Endothelial cell of umbilical vein (primary cell): ENCODE measurements at regions of chr5 and their contacts with region 1.

Region 1: DNA sequence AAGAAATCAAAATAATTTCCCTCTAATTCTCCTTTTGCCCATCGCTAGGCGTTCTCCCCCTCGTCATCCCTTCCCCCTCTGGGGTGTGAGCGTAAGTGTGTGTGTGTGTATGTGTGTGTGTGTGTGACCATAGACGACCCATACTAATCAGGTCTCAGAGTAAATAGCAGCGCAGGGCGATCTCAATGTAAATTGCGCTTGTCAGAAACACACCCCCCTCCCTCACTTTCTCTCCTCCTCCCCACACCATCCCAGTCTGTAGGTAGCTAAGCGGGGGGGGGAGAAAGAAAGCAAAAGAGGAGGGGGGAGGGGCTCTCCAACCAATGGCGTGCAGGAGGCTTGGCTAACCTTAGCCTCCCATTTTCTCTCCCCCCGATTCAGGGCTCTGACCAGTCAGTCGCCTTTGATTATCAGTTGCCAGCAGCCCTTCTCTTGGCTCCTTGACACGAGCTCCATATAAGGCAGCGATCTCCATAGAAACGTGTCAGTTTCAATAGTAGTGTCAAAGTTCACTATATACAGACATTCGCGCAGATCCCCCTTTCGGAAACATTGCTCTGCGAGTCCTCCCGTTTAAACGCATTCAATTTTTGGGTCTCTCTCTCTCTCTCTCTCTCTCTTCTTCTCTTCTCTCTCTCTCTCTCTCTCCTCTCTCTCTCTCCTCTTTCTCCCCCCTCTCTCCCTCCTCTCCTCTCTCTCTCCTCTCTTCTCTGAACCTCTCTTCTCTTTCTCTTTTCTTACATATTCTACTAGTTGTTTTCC is at the start of gene NR2F1:
- DNase-seq: peak; percentile 99
- H3K4me3 ChIP-seq: peak within 1 kb of the TSS; percentile 76 to 93 (median 85)
- H3K27ac ChIP-seq: peak within 1 kb of the TSS; percentile 86
- H3K4me1 ChIP-seq: peaks cover 25% of the 10 kb centered on the region
- H3K27me3 ChIP-seq: no peaks in the 10 kb centered on the region
- CTCF ChIP-seq: no peak
- POLR2A ChIP-seq: peak; percentile 89
- total RNA-seq, gene NR2F1: 21.5 and 23.9 TPM in 2 replicates

Region 2: GRCh38 chr5:92641031-92641962 is 941.6 kb before region 1 on chr5:
- CTCF ChIA-PET with region 1: no interaction called
- POLR2A ChIA-PET with region 1: no interaction called
- dilution Hi-C with region 1: no loop called
- intact Hi-C with region 1: loop called (anchors 5 kb)
- DNase-seq: peak; percentile 90
- H3K4me3 ChIP-seq: peak overlapping the region; percentile 10 to 63 (median 22)
- H3K27ac ChIP-seq: peak overlapping the region; percentile 33
- H3K4me1 ChIP-seq: peaks cover 13% of the 10 kb centered on the region
- H3K27me3 ChIP-seq: no peaks in the 10 kb centered on the region
- CTCF ChIP-seq: no peak
- POLR2A ChIP-seq: no peak

Region 3: DNA sequence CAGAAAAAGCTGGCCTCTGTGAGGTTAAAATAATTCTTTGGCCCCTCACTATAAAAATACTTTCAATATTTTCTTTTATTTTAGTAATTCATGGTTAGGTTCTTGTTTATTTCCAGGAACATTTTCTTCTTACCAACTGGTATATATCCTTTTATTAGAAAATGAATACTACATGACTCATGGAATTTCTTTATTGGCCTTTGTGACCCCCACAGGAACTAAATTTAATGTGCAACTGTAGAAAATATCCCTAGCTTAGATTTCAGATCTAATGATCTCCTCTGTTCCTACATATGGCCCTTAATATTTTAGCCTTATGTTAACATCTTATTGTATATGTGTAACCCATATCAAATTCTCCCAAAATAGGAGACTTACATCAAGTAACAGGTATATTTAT is 431.7 kb before region 1 on chr5:
- CTCF ChIA-PET with region 1: no interaction called
- POLR2A ChIA-PET with region 1: no interaction called
- dilution Hi-C with region 1: no loop called
- intact Hi-C with region 1: loop called (anchors 2 kb)
- DNase-seq: peak; percentile 83
- H3K4me3 ChIP-seq: no peak overlapping the region
- H3K27ac ChIP-seq: peak overlapping the region; percentile 66
- H3K4me1 ChIP-seq: peaks cover 17% of the 10 kb centered on the region
- H3K27me3 ChIP-seq: no peaks in the 10 kb centered on the region
- CTCF ChIP-seq: no peak
- POLR2A ChIP-seq: no peak

Region 4: DNA sequence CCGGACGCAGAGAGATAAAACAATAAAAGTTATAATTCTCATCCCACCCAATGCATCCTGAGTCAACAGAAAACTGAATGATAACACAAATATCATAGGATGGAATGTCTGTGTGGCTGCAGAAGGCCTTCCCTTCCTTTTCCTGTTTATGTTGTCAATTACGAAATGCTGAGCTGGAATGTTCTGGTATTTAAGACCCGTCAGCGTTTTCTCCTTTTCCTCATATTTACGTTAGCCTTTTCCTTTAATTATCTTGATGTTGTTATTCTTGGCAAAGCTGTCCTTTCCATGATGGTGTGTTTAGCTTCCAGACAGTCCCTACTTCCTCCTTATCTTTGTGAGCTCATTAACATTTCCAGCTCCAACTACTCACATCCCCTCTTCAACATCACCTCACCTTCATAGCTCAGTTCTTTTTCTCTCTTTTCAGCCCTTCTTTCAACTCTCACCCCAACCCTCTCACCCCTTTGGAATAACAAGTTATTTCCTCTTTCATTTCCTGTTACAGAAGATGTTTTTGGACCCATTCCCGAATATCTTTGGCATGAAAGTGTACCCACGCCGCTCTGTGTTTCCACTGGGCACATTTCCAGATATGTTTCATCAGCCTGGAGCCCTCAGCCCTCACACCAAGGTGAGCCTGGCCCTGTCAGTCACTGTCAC is 223.4 kb before region 1 on chr5:
- CTCF ChIA-PET with region 1: interaction called, 9 read pairs
- POLR2A ChIA-PET with region 1: interaction called, 6 read pairs
- dilution Hi-C with region 1: no loop called
- intact Hi-C with region 1: loop called (anchors 1 kb)
- DNase-seq: peak; percentile 98
- H3K4me3 ChIP-seq: peak overlapping the region in 2 of 3 experiments; percentile 10 to 40
- H3K27ac ChIP-seq: peak overlapping the region; percentile 91
- H3K4me1 ChIP-seq: peaks cover 49% of the 10 kb centered on the region
- H3K27me3 ChIP-seq: no peaks in the 10 kb centered on the region
- CTCF ChIP-seq: no peak
- POLR2A ChIP-seq: peak; percentile 91

Region 5: DNA sequence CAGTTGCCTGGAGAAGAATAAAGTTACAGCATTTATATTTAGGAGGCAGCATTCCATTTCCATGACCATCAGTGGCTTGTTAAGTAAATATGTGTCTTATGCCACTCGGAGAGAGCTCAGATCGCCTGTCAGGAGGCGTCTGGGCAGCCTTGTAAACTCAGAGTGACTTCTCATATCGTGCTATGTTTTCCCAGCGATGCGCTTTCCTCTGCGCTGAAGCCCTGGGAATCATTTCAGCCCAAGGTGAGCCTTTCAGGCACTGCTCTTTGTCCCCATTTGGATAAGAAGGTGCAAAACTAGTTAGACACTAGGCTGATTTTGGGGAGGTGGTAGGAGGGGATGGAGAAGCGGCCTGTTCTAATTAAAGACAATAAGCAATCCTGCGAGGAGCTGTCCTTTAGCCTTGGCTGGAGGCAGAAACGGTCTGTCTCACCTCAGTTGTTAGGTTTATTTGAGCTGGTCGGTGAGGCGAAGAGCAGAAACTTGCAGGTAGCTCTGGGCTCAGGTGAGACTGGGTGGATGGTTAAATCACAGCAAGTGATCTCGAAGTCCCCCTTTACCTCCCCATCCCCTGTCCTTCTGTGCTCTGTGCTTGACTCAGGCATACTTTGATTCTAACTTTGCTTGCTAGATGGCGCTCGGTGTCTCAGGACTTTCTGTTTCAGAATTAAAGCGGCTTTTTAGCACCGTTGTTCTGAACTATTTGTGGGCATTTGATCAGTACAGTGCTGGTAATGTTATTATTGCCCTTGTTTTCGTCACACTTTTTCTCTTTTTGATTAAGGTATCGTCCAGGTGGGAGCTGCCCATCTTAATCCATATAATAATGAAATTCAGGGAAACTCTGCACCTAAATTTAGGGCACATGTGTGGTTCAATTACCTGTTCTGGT is 24.8 kb after region 1 on chr5:
- CTCF ChIA-PET with region 1: interaction called, 8 read pairs
- POLR2A ChIA-PET with region 1: interaction called, 4 read pairs
- dilution Hi-C with region 1: no loop called
- intact Hi-C with region 1: loop called (anchors 2 kb)
- DNase-seq: peak; percentile 74
- H3K4me3 ChIP-seq: no peak overlapping the region
- H3K27ac ChIP-seq: no peak overlapping the region
- H3K4me1 ChIP-seq: peaks cover 6% of the 10 kb centered on the region
- H3K27me3 ChIP-seq: peaks cover 71 to 98% of the 10 kb centered on the region in 2 experiments
- CTCF ChIP-seq: peak; percentile 28 to 59
- POLR2A ChIP-seq: no peak

Region 6: DNA sequence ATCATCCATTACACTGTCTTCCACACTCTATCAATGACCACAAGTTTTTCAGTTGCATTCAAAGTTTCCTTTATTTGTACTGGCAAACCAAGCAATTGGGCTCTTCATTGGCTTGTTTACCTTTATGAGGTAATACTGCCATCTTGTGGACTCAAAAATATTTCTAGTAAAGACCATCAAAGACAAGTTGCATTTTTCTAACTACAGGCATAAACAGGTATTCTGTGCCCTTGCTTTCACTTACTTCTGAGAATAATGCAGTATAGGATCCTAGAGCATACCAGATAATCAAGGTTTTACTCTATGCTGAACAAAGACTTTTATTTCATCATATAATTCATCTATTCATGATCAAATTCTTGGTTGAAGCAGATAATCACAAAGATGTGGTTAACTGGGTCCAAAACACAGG is 332.3 kb after region 1 on chr5:
- CTCF ChIA-PET with region 1: interaction called, 4 read pairs
- POLR2A ChIA-PET with region 1: interaction called, 3 read pairs
- dilution Hi-C with region 1: no loop called
- intact Hi-C with region 1: loop called (anchors 1 kb)
- DNase-seq: peak; percentile 50
- H3K4me3 ChIP-seq: no peak overlapping the region
- H3K27ac ChIP-seq: no peak overlapping the region
- H3K4me1 ChIP-seq: no peaks in the 10 kb centered on the region
- H3K27me3 ChIP-seq: no peaks in the 10 kb centered on the region
- CTCF ChIP-seq: peak; percentile 24
- POLR2A ChIP-seq: no peak